ENCODE measurements at regions of chr15 and their contacts with region 1.

Region 1: GRCh38 chr15:74615508-74616365 is at the start of gene CLK3:
- DNase-seq: peak; percentile 85
- ATAC-seq: peak; percentile 87
- H3K4me3 ChIP-seq: peak within 1 kb of the TSS; percentile 90 to 100 (median 94)
- H3K27ac ChIP-seq: peak within 1 kb of the TSS; percentile 93
- H3K4me1 ChIP-seq: peaks cover 39% of the 10 kb centered on the region
- H3K27me3 ChIP-seq: peaks cover 0 to 20% of the 10 kb centered on the region in 2 experiments; a peak in 2 of 5 replicates
- CTCF ChIP-seq: peak; percentile 12; the same call in 1 of the 2 replicates
- EP300 ChIP-seq: peak; percentile 9 to 51; a peak in 2 of 4 replicates
- POLR2A ChIP-seq: no peak; a peak in 1 of 4 replicates
- RAD21 ChIP-seq: peak; percentile 58
- total RNA-seq, gene CLK3: 31.4 and 41.5 TPM in 2 replicates

Region 2: DNA sequence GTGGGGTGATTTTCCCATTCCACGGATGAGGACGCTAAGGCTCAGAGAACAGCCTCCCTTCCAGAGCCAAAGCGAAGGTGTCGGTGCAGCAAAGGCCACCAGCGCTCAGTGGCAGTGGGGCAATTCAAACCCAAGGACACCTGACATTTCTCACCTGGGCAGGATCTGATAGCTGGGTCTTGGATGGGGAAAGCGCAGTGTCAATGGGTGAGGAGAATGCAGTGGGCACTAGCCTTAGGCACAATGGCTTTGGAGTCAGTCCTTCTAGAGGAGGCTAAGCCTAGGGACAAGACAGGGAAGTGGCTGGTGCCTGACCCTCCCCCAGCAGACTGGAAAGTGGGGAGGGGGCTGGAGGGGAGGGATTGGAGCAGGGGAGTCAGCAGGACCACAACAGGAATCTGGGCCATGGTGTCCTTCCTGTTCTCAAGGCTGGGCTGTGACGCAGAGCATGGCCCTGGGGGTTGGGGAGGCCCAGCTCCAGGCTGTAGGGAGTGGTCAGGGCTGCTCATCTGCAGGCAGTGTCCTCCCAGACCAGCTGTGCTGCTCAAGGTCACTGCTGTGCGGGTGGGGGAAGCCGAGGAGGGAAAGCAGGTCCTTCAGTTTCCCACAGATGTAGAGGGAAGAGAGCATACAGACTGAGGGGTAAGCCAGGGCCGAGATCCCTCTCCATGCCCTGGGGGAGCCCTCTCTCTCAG is 289.1 kb before region 1 on chr15:
- CTCF ChIA-PET with region 1: no interaction called
- POLR2A ChIA-PET with region 1: no interaction called
- in situ Hi-C with region 1: no loop called
- intact Hi-C with region 1: no loop called
- DNase-seq: no peak
- ATAC-seq: no peak
- H3K4me3 ChIP-seq: no peak overlapping the region
- H3K27ac ChIP-seq: no peak overlapping the region
- H3K4me1 ChIP-seq: no peaks in the 10 kb centered on the region
- H3K27me3 ChIP-seq: peaks cover 4 to 30% of the 10 kb centered on the region in 2 experiments; a peak in 4 of 5 replicates
- CTCF ChIP-seq: no peak
- EP300 ChIP-seq: no peak
- POLR2A ChIP-seq: no peak
- RAD21 ChIP-seq: no peak

Region 3: DNA sequence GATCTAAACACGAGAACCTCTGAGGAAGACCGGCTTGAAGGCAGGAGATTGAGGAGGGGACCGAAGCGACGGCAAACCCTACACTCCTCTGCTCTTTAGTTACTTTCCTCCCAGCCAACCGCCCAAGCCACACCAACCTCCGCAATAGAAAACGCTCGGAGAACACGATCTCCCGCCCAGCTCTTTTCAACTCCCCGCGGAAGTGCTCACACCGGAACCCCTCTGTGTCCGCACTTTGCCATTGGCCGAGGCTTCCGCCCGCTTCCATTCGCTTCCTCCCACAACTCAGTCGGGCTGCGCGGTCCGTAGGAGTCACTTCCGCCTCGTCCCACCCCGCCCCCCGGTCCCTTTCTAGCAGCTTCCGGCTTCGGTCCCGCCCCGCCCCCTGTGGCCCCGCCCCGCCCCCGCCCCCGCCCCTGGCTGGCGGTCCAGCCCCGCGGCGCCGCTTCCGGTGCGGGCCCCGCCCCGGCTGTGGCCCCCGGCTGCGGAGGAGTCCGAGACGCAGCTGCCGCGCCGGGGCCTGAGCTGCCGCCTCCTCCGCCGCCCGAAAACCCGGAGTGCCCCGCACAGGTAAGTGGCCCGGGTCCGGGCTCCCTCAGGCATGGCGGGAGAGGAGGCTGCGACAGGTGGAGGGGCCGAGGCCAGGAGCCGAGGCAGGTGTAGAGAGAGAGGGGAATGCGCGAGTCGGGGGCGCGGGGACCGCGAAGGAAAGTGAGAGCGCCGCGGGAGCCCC is 74.8 kb before region 1 on chr15 and contains the start of gene ARID3B:
- CTCF ChIA-PET with region 1: no interaction called
- POLR2A ChIA-PET with region 1: interaction called, 19 read pairs
- in situ Hi-C with region 1: no loop called
- intact Hi-C with region 1: loop called (anchors 1 kb)
- DNase-seq: peak; percentile 94
- ATAC-seq: peak; percentile 99
- H3K4me3 ChIP-seq: peak within 1 kb of the TSS; percentile 97 to 99 (median 98)
- H3K27ac ChIP-seq: peak within 1 kb of the TSS; percentile 80
- H3K4me1 ChIP-seq: peaks cover 37% of the 10 kb centered on the region
- H3K27me3 ChIP-seq: no peaks in the 10 kb centered on the region; a peak in 1 of 5 replicates
- CTCF ChIP-seq: no peak
- EP300 ChIP-seq: no peak
- POLR2A ChIP-seq: peak; percentile 68 to 92
- RAD21 ChIP-seq: peak; percentile 6; the same call in 1 of the 2 replicates
- total RNA-seq, gene ARID3B: 5.3 and 7.0 TPM in 2 replicates

Region 4: GRCh38 chr15:74584779-74585178 is 31.0 kb before region 1 on chr15:
- CTCF ChIA-PET with region 1: no interaction called
- POLR2A ChIA-PET with region 1: no interaction called
- in situ Hi-C with region 1: no loop called
- intact Hi-C with region 1: no loop called
- DNase-seq: no peak
- ATAC-seq: no peak
- H3K4me3 ChIP-seq: no peak overlapping the region
- H3K27ac ChIP-seq: no peak overlapping the region
- H3K4me1 ChIP-seq: no peaks in the 10 kb centered on the region
- H3K27me3 ChIP-seq: no peaks in the 10 kb centered on the region
- CTCF ChIP-seq: no peak
- EP300 ChIP-seq: no peak
- POLR2A ChIP-seq: no peak
- RAD21 ChIP-seq: no peak

Region 5: DNA sequence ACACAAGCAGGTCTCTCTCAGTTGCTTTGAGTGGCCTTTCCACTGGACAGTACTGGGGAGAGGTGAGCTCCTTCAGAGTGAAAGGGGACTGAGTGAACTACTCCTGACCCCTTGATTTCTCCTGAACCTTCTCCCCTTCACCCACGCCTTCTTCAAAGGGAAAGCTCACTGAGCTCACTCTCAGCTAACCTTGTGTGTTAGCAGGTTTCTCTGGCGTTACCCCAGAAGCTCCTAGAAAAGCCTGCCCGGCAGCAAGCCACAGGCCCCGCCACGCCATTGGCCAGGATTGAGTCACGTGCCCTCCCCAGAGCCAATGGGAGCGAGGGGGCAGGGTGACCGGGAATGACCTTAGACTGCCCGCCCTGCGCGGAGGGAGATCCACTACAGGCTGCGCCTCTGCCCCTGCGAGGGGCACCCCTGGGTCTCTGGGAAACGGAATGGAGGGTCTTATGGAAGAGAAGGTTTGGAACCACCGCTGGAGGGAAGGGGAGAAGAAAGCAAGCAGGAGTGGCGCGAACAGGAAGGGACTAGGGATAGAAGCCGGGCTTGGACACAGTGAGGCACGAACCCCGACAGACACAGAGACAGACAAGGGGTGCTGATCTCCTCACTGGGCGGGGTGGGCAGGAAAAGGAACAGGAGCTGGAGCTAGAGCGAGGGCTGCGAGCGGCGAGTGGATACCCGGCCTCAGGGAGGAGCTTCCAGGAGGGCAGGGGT is 17.5 kb before region 1 on chr15:
- CTCF ChIA-PET with region 1: no interaction called
- POLR2A ChIA-PET with region 1: interaction called, 52 read pairs
- in situ Hi-C with region 1: no loop called
- intact Hi-C with region 1: no loop called
- DNase-seq: peak; percentile 84
- ATAC-seq: peak; percentile 95
- H3K4me3 ChIP-seq: peak overlapping the region; percentile 57 to 81 (median 63)
- H3K27ac ChIP-seq: peak overlapping the region; percentile 83
- H3K4me1 ChIP-seq: peaks cover 35% of the 10 kb centered on the region
- H3K27me3 ChIP-seq: 0 out of 5 replicates have a peak, but pooled peaks cover 0 to 1% of the 10 kb centered on the region in 2 experiments
- CTCF ChIP-seq: peak; percentile 15; the same call in 1 of the 2 replicates
- EP300 ChIP-seq: peak in 1 of 2 experiments; percentile 45; a peak in 1 of 4 replicates
- POLR2A ChIP-seq: peak; percentile 65 to 96
- RAD21 ChIP-seq: 0 out of 2 replicates have a peak, but pooled peaks have one; percentile 7

Measured in HepG2 (cell line).